ENCODE measurements at regions of chr17 and their contacts with region 1.

Region 1: DNA sequence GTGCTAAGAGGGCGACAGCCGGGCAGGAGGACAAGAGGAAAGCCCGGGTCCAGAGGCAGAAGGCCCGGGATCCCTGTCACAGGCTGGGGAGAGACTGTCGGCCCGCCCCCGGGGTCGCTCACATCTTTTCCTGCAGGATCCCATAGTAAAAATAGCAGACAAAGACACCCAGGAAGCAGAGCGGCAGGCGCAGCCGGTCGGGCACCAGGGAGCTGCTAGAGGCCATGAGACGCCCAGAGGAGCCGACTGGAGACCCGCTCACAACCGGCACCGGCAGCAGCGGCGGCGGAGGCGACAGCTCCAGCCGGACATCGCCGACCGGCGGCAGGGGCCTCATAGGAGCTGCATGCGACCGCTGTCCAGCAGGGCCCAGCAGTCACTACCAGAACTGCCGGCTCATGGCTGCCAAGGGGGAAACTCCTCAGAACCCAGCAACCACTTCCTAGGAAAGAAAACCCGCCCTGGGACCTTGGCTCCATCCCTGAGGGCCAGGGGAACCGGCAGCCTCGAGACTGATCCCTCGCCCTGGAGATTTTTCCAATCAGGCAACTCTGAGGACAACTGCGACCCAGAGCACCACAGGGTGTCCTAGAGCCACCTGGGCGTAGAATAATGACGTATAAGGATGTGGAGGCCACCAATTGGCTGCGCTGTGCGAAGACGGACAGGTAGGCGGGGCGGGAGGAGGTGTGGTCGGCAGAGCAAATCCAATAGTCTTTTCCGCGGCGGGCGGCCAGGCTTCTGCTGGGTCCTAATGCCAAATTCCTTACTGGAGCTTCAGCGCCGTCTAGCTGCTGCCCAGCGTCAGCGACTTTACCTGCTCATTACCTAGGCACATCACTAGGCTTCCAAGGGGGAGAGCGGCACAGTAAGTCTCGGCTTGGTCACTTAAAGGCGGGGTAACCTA is at the start of gene SLC35B1:
- DNase-seq: peak; percentile 99
- ATAC-seq: peak; percentile 100
- H3K4me3 ChIP-seq: peak within 1 kb of the TSS; percentile 80
- H3K27ac ChIP-seq: peak within 1 kb of the TSS; percentile 95
- H3K4me1 ChIP-seq: peaks cover 5% of the 10 kb centered on the region
- H3K27me3 ChIP-seq: no peaks in the 10 kb centered on the region
- CTCF ChIP-seq: peak; percentile 88
- POLR2A ChIP-seq: peak; percentile 82
- RAD21 ChIP-seq: peak; percentile 61
- total RNA-seq, gene SLC35B1: 66.9 and 86.2 TPM in 2 replicates

Region 2: DNA sequence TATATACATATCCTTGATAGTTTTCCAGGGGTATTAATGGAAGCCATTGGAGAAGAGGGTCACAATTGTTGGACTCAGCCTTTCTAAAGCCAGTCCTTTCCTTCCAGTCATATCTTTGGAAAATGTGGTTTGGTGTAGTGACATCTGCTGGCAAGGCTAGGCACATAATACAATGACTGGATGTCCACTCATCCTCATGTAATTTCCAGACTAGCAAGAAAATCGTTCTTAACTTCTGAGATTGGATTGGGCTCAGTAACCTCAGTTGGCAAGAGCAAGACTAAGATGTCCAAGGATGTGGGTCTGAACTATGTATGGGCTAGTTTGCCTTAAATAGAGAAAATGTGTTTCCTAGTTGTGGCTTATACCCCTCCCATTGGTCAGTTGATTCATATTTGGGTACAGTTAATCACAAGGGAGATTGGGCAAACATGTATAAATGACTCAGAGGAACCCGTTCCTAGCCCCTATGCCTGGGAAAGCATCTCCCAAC is 71.9 kb after region 1 on chr17:
- CTCF ChIA-PET with region 1: interaction called, 3 read pairs
- POLR2A ChIA-PET with region 1: interaction called, 5 read pairs
- dilution Hi-C with region 1: no loop called
- in situ Hi-C with region 1: no loop called
- intact Hi-C with region 1: loop called (anchors 1 kb)
- DNase-seq: peak; percentile 84
- ATAC-seq: peak; percentile 91
- H3K4me3 ChIP-seq: no peak overlapping the region
- H3K27ac ChIP-seq: no peak overlapping the region
- H3K4me1 ChIP-seq: no peaks in the 10 kb centered on the region
- H3K27me3 ChIP-seq: peaks cover 2% of the 10 kb centered on the region; the same call in 1 of the 2 replicates
- CTCF ChIP-seq: peak; percentile 67
- POLR2A ChIP-seq: no peak
- RAD21 ChIP-seq: peak; percentile 59

Region 3: DNA sequence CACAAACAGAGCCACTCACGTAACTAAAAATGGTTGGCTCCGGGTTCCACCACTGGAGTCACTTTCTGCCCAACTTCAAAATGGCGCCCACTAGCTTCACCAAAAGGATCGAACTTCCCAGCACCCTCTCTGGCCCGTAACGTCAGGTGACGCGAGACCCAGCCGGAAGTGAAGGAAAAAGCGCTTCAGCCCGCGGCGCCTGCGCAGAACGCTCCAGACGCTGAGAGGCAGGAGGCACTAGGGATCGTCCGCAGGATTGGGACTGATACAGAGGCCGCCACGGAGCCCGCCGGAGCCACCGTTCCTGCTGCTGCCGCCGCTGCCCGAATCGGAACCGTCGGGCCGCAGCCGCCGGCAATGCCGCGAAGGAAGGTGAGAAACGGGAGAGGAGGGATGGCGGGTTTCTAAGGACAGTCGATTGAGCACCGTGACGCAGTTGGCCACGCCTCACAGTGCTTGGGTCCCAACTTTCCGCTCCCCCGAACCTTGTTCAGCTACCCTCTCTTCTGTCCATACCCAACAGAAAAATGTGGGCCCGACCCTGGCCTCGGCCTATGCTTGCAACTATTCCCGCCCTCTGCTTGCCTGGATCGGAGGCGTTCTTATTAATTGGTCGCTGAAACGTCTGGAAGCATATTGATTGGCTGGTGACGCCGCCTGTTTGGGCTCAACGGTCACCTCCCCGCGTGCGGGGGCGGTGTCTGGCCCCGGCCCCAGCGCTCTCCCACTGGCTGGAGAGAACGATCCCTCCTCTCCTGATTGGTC is 80.8 kb after region 1 on chr17 and contains the start of gene KAT7:
- CTCF ChIA-PET with region 1: interaction called, 3 read pairs
- POLR2A ChIA-PET with region 1: no interaction called
- dilution Hi-C with region 1: no loop called
- in situ Hi-C with region 1: no loop called
- intact Hi-C with region 1: loop called (anchors 2 kb)
- DNase-seq: peak; percentile 99
- ATAC-seq: peak; percentile 91
- H3K4me3 ChIP-seq: peak within 1 kb of the TSS; percentile 74
- H3K27ac ChIP-seq: peak within 1 kb of the TSS; percentile 89
- H3K4me1 ChIP-seq: peaks cover 7% of the 10 kb centered on the region
- H3K27me3 ChIP-seq: no peaks in the 10 kb centered on the region
- CTCF ChIP-seq: 0 out of 2 replicates have a peak, but pooled peaks have one; percentile 5
- POLR2A ChIP-seq: peak; percentile 88
- RAD21 ChIP-seq: no peak
- total RNA-seq, gene KAT7: 20.6 and 21.9 TPM in 2 replicates

Region 4: GRCh38 chr17:49845321-49845720 is 137.5 kb after region 1 on chr17:
- CTCF ChIA-PET with region 1: no interaction called
- POLR2A ChIA-PET with region 1: no interaction called
- dilution Hi-C with region 1: no loop called
- in situ Hi-C with region 1: loop called (anchors 5 kb)
- intact Hi-C with region 1: no loop called
- DNase-seq: no peak
- ATAC-seq: peak; percentile 36
- H3K4me3 ChIP-seq: no peak overlapping the region
- H3K27ac ChIP-seq: no peak overlapping the region
- H3K4me1 ChIP-seq: peaks cover 6% of the 10 kb centered on the region; the same call in 1 of the 2 replicates
- H3K27me3 ChIP-seq: no peaks in the 10 kb centered on the region; the same call in 1 of the 2 replicates
- CTCF ChIP-seq: no peak
- POLR2A ChIP-seq: no peak
- RAD21 ChIP-seq: no peak

Region 5: DNA sequence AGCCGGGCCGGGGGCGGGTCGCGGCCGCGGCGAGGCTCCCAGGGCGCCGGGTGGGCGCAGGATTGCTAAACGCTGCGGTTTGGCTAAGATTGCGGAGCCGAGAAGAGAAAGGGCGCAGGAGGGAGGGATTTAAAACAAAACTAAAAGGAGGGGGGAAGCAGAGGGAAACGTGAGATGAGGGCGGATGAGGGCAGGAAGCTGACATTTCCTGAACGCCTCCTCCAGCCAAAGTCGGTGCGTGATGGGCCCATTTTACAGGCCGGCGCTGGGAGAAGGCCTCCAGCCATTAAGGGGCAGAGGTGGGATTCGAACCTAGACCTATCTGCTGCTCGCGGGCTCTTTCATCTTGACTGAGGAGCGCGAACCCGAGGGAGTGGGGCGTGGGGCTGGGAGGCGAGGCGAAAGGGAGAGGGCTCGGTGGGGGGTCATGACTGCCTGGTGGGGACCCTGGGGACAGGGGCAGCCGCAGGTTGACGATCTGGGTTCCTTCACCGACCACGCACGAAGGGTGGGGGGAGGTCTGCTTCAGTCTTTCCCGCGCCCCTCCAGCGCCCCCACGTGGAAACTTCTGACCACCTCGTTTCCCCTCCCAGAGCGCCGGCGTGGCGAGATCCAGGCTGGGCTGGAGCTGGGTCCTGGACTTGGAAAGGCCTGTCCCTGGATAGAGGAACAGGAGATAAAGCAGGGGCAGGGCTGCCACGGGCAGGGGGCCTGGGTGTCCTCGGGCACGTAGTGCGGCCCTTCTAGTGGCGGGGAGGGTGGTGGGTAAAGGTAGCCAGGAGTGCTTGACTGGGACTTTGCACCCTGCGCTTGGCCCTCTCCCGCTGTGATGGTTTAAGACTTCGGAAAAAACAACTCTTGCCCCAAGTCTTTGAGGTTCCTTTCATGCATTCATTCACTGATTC is 143.8 kb after region 1 on chr17:
- CTCF ChIA-PET with region 1: no interaction called
- POLR2A ChIA-PET with region 1: no interaction called
- dilution Hi-C with region 1: no loop called
- in situ Hi-C with region 1: loop called (anchors 5 kb)
- intact Hi-C with region 1: loop called (anchors 1 kb)
- DNase-seq: peak; percentile 59
- ATAC-seq: peak; percentile 85
- H3K4me3 ChIP-seq: peak overlapping the region; percentile 39
- H3K27ac ChIP-seq: no peak overlapping the region
- H3K4me1 ChIP-seq: peaks cover 3% of the 10 kb centered on the region; the same call in 1 of the 2 replicates
- H3K27me3 ChIP-seq: peaks cover 23% of the 10 kb centered on the region; the same call in 1 of the 2 replicates
- CTCF ChIP-seq: peak; percentile 77
- POLR2A ChIP-seq: no peak
- RAD21 ChIP-seq: peak; percentile 77